GM10248 (cell line): ENCODE measurements at regions of chr16 and their contacts with region 1.

Region 1: GRCh38 chr16:88737298-88738150 is 31.2 kb downstream of the CTU2 start:
- DNase-seq: peak; percentile 90
- CTCF ChIP-seq: peak; percentile 95

Region 2: DNA sequence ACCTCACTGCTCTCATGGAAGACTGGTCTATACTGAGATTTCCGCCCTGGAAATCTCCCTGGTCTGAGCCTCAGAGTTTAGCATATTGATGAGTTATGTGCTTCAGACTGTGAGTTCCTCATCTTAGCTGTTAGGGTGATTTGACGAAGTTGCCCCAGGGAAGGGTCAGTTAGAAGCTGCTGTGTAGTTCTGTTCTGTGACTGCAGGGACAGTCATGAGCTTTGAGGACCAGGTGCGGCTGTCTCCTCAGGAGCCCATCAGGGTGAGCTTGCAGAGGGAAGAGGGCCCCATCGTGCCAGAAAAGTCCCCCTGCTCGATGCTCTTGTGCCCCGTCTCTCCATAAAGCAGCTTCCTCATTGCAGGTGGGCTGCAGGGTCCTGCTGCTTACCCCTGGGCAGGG is 127.4 kb before region 1 on chr16:
- CTCF ChIA-PET with region 1: no interaction called
- POLR2A ChIA-PET with region 1: no interaction called
- DNase-seq: no peak
- CTCF ChIP-seq: no peak

Region 3: DNA sequence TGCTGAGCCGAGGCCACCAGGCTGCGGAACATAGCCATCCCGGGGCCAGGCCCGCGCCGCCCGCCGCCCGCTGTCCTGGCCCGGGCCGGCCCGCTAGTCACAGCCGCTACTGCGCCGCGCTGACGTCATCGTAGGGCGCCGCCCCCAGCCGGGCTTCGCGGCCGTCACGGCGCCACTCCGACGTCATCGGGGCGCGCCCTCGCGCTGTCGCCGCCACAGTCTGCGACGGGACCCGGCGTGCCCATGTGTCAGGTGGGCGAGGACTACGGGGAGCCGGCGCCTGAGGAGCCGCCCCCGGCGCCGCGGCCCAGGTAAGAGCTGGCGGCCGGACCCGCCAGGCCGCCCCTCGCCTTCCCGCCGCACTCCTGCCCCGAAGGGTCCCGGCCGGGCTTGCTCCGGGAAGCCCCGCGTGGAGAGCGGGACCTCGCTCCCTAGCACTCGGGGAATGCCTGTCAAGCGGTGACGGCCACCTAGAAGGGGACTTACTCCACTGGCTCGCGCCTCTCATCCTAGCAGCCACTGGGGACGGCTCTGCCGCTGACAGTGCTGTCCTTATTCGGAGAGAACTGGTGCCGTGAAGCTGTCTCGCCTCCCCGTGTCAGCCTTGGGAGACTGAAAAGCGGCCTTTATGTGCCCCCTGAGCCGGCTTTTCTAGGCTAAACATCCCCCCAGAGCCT is 31.1 kb before region 1 on chr16 and contains the starts of genes CTU2 and RNF166:
- CTCF ChIA-PET with region 1: interaction called, 23 read pairs
- POLR2A ChIA-PET with region 1: no interaction called
- DNase-seq: peak; percentile 98
- CTCF ChIP-seq: no peak

Region 4: DNA sequence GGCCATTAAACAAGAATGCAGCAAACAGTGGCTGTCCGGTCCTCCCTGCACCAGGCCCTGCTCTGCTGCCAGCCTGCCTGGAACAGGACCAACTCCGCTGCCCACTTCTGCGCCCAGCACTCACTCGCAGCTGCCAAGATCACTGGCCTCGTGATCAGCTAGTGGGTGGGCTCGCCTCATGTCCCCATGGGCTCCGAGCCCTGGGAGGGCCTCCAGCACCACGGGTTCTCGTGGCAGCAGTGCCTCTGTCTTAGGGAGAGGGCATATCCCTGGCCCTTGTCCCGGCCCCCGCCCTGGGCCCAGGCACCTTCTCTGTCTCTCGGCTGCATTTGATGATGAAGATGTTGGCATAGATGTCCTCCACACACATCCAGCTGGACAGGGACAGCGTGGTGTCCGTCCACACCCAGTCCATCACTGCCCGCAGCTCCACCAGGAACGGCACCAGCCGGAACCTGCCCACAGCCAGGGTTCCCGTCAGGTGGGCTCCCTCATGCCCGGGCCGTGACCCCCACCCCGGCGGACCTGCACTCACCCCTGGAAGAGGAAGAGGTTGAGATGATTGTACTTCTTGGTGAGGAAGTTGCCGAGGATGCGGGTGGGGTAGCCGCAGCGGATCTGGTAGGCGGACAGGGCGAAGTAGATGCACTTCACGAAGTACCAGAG is 18.1 kb before region 1 on chr16:
- CTCF ChIA-PET with region 1: interaction called, 38 read pairs
- POLR2A ChIA-PET with region 1: no interaction called
- DNase-seq: no peak
- CTCF ChIP-seq: no peak

Region 5: GRCh38 chr16:88770461-88771293 is 33.2 kb after region 1 on chr16:
- CTCF ChIA-PET with region 1: interaction called, 14 read pairs
- POLR2A ChIA-PET with region 1: no interaction called
- DNase-seq: no peak
- CTCF ChIP-seq: no peak

Region 6: GRCh38 chr16:88799569-88800276 is 62.2 kb after region 1 on chr16:
- CTCF ChIA-PET with region 1: interaction called, 16 read pairs
- POLR2A ChIA-PET with region 1: no interaction called
- DNase-seq: no peak
- CTCF ChIP-seq: no peak

Region 7: DNA sequence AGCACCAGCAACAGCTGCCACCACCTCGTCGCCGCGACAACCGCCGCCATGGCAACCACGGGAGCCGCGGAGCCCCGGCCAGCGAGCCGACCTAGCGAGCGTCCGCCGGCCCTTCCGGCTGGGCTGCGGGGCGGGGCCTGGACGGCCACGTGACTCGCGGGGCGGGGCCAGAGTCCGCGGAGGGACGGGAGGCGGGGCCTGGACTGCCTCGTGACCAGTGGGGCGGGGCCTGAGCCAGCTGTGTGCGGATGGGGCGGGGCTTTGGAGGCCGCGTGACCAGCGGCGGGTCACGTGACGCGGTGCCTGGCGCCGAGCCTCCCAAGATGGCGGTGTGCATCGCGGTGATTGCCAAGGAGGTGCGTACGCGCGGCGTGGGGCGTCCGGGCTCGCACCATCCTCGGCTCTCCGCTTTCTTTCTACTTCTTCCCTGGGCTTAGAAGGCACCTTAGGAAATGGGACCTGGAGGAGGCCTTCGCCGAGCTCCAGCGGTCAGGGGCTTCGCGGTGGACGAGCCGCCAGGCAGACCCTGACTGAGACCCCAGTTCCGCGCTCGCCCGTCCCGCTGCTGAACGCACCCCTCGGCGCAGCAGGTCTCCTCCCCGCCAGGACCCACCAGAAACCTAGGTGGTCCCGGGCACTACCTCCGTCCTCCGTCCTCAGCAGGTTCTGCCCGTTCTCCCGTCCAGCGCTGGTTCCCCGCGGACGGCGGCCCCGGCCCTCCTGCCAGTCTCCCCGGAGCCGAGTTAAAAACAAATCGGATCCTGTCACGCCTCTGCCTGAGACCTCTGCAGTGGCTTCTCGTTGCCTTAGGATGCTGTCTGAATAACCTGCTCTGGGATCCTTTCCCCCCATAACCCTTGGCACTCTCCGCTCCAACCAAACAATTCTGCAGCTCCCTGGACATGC is 119.6 kb after region 1 on chr16 and contains the starts of genes GALNS and TRAPPC2L:
- CTCF ChIA-PET with region 1: interaction called, 12 read pairs
- POLR2A ChIA-PET with region 1: no interaction called
- DNase-seq: peak; percentile 100
- CTCF ChIP-seq: peak; percentile 2

Region 8: GRCh38 chr16:89217388-89218191 is 480.1 kb after region 1 on chr16 and contains the start of gene ZNF778:
- CTCF ChIA-PET with region 1: interaction called, 18 read pairs
- POLR2A ChIA-PET with region 1: no interaction called
- DNase-seq: peak; percentile 94
- CTCF ChIP-seq: no peak